ENCODE measurements at regions of chr4 and their contacts with region 1.

Region 1: GRCh38 chr4:37858872-37859271 is 32.0 kb upstream of the TBC1D1 start:
- DNase-seq: no peak
- ATAC-seq: no peak
- H3K4me3 ChIP-seq: no peak overlapping the region
- H3K4me3 Mint-ChIP-seq: no peak overlapping the region
- H3K27ac ChIP-seq: no peak overlapping the region
- H3K27ac Mint-ChIP-seq: no peak overlapping the region
- H3K4me1 ChIP-seq: no peaks in the 10 kb centered on the region
- H3K4me1 Mint-ChIP-seq: no peaks in the 10 kb centered on the region
- H3K27me3 ChIP-seq: no peaks in the 10 kb centered on the region
- H3K27me3 Mint-ChIP-seq: no peaks in the 10 kb centered on the region
- CTCF ChIP-seq: no peak

Region 2: DNA sequence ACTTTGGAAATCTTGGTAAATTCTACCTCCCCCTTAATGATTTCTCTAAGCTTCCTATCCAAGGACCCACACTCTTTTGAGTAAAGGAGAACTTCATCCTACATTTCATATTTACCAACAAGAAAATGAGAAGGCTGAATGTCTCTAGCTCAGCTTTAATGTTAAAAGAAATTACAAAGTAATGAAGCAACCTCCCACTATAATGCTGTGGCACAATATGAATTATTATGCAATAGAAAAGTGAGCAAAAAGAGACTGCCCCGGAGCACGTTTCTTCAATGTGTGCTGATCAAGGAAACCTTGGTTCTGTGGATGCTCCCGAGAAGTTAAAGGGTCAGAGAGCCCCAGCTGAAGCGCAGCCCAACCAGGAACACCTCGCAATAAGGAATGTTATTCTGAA is 22.9 kb after region 1 on chr4:
- CTCF ChIA-PET with region 1: no interaction called
- POLR2A ChIA-PET with region 1: interaction called, 4 read pairs
- intact Hi-C with region 1: loop called in 1 of 2 experiments (anchors 2 kb)
- DNase-seq: no peak
- ATAC-seq: no peak
- H3K4me3 ChIP-seq: no peak overlapping the region
- H3K4me3 Mint-ChIP-seq: no peak overlapping the region
- H3K27ac ChIP-seq: no peak overlapping the region
- H3K27ac Mint-ChIP-seq: no peak overlapping the region
- H3K4me1 ChIP-seq: no peaks in the 10 kb centered on the region
- H3K4me1 Mint-ChIP-seq: no peaks in the 10 kb centered on the region
- H3K27me3 ChIP-seq: no peaks in the 10 kb centered on the region
- H3K27me3 Mint-ChIP-seq: no peaks in the 10 kb centered on the region
- CTCF ChIP-seq: no peak

Measured in CD8-positive, alpha-beta T cell (primary cell).